Heart left ventricle (tissue), 16 donors: ENCODE measurements at regions of chr4 and their contacts with region 1.

Region 1: DNA sequence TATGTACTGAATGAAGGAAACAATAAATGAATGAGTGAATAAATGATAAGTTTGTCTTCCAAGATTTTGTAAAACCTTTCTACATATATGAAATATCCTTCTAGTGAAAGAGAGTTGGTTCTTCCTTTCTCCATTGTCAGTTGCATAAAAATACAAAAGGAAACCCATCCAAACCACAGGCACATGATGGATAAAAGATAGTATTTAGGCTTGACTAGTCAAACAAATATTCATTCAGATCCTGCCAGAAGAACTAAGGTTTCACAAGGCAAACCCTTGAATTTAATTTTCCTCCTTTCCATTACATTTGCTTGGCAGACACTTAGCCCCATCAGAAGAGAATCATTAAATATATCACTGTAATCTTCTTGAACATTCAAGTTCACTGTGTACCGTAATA is 208.4 kb downstream of the COL25A1 start:
- DNase-seq: no peak
- ATAC-seq: no peak
- H3K4me3 ChIP-seq: no peak overlapping the region
- H3K27ac ChIP-seq: no peak overlapping the region
- H3K4me1 ChIP-seq: no peaks in the 10 kb centered on the region
- H3K27me3 ChIP-seq: no peaks in the 10 kb centered on the region
- CTCF ChIP-seq: no peak
- POLR2A ChIP-seq: no peak

Region 2: GRCh38 chr4:108519911-108520601 is 574.0 kb before region 1 on chr4:
- intact Hi-C with region 1: no loop called
- DNase-seq: no peak
- ATAC-seq: no peak
- H3K4me3 ChIP-seq: no peak overlapping the region
- H3K27ac ChIP-seq: no peak overlapping the region
- H3K4me1 ChIP-seq: no peaks in the 10 kb centered on the region
- H3K27me3 ChIP-seq: peaks cover 0 to 9% (median 0%) of the 10 kb centered on the region in 9 donors
- CTCF ChIP-seq: no peak
- POLR2A ChIP-seq: no peak

Region 3: GRCh38 chr4:108662629-108663028 is 431.4 kb before region 1 on chr4:
- intact Hi-C with region 1: no loop called
- DNase-seq: no peak
- ATAC-seq: no peak
- H3K4me3 ChIP-seq: no peak overlapping the region
- H3K27ac ChIP-seq: no peak overlapping the region
- H3K4me1 ChIP-seq: no peaks in the 10 kb centered on the region
- H3K27me3 ChIP-seq: no peaks in the 10 kb centered on the region
- CTCF ChIP-seq: no peak
- POLR2A ChIP-seq: no peak

Region 4: GRCh38 chr4:109207060-109207459 is 113.0 kb after region 1 on chr4:
- intact Hi-C with region 1: no loop called
- DNase-seq: no peak
- ATAC-seq: no peak
- H3K4me3 ChIP-seq: no peak overlapping the region
- H3K27ac ChIP-seq: no peak overlapping the region
- H3K4me1 ChIP-seq: no peaks in the 10 kb centered on the region
- H3K27me3 ChIP-seq: no peaks in the 10 kb centered on the region
- CTCF ChIP-seq: no peak
- POLR2A ChIP-seq: no peak

Region 5: GRCh38 chr4:109375778-109376414 is 281.8 kb after region 1 on chr4:
- intact Hi-C with region 1: loop called in 1 of 10 experiments (anchors 10 kb)
- DNase-seq: no peak
- ATAC-seq: no peak
- H3K4me3 ChIP-seq: no peak overlapping the region
- H3K27ac ChIP-seq: no peak overlapping the region
- H3K4me1 ChIP-seq: no peaks in the 10 kb centered on the region
- H3K27me3 ChIP-seq: no peaks in the 10 kb centered on the region
- CTCF ChIP-seq: no peak
- POLR2A ChIP-seq: no peak

Region 6: DNA sequence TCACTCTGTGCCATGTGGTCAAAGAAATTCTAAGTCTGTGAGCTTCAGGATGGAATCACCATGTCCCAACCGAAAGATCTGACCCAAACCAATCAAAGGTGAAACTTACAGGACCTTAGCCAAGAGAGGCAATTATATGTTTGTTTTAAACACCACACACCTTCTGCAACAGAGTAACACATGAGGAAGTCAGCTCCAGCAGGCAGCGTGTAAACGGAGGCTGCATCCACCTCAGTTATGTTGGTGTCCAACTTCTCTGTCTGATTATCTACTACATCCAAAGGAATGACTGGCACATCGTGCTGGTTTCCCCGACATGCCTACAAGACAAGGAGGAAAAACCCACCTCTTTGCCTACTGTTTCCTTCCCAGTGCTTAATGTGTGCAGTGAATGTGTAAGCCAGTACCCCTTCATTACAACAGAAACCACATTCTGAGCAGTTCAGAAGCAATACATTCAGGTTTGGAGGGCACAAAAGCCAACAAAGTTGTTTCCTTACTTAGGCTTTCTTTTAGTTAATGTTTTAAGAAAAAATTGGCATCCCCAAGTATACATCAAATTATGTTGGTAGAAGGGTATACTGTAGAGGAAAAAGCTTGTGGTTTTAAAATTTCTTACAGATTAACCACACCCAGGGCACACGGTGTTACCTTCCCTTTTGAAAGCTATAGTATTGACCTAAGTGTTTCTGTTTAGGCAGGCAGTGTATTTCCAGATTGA is 596.8 kb after region 1 on chr4:
- intact Hi-C with region 1: no loop called
- DNase-seq: no peak
- ATAC-seq: no peak
- H3K4me3 ChIP-seq: no peak overlapping the region
- H3K27ac ChIP-seq: no peak overlapping the region
- H3K4me1 ChIP-seq: peaks cover 0 to 4% (median 0%) of the 10 kb centered on the region in 12 donors
- H3K27me3 ChIP-seq: no peaks in the 10 kb centered on the region
- CTCF ChIP-seq: no peak
- POLR2A ChIP-seq: no peak